HCT116 (cell line): ENCODE measurements at regions of chr17 and their contacts with region 1.

Region 1: GRCh38 chr17:74089869-74090464 is 113.5 kb upstream of the RPL38 start:
- DNase-seq: peak; percentile 66
- ATAC-seq: peak; percentile 88
- H3K4me3 ChIP-seq: no peak overlapping the region
- H3K27ac ChIP-seq: no peak overlapping the region
- H3K4me1 ChIP-seq: no peaks in the 10 kb centered on the region
- H3K27me3 ChIP-seq: peaks cover 23% of the 10 kb centered on the region
- CTCF ChIP-seq: peak; percentile 66 to 99 (median 93); a peak in 5 of 6 replicates
- POLR2A ChIP-seq: no peak
- RAD21 ChIP-seq: peak; percentile 70

Region 2: GRCh38 chr17:73719588-73720071 is 370.3 kb before region 1 on chr17:
- CTCF ChIA-PET with region 1: no interaction called
- POLR2A ChIA-PET with region 1: no interaction called
- RAD21 ChIA-PET with region 1: no interaction called
- intact Hi-C with region 1: no loop called
- DNase-seq: no peak
- ATAC-seq: no peak
- H3K4me3 ChIP-seq: no peak overlapping the region
- H3K27ac ChIP-seq: no peak overlapping the region
- H3K4me1 ChIP-seq: no peaks in the 10 kb centered on the region
- H3K27me3 ChIP-seq: peaks cover 57% of the 10 kb centered on the region
- CTCF ChIP-seq: no peak
- POLR2A ChIP-seq: no peak
- RAD21 ChIP-seq: no peak

Region 3: GRCh38 chr17:74037320-74037719 is 52.6 kb before region 1 on chr17:
- CTCF ChIA-PET with region 1: no interaction called
- POLR2A ChIA-PET with region 1: no interaction called
- RAD21 ChIA-PET with region 1: no interaction called
- intact Hi-C with region 1: no loop called
- DNase-seq: no peak
- ATAC-seq: peak; percentile 39; the same call in 1 of the 2 replicates
- H3K4me3 ChIP-seq: no peak overlapping the region
- H3K27ac ChIP-seq: no peak overlapping the region
- H3K4me1 ChIP-seq: peaks cover under 1 to 3% of the 10 kb centered on the region in 2 experiments
- H3K27me3 ChIP-seq: peaks cover 28% of the 10 kb centered on the region; the same call in 1 of the 2 replicates
- CTCF ChIP-seq: no peak
- POLR2A ChIP-seq: no peak
- RAD21 ChIP-seq: no peak

Region 4: DNA sequence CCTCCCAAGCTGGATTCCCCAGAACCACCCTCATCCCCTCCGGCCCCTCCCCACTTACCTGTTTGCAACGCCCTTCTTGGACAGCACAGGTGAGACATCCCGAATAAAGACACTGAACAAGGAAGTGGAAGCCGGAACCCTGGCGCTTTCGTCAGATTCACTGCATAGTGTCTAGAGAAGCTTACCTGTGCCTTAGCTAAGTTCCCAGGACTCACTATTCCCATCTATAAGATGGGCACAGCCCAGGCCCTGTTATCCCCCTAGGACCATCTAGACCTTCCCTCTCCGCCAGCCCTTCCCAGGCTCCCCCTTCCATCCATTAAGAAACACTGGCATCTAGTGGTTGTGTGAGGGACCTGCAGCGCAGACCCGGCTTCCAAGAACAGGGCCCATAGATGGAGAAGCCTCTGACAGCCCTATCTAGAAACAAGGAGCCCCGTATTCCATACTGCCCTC is 86.6 kb after region 1 on chr17:
- CTCF ChIA-PET with region 1: interaction called, 5 read pairs
- POLR2A ChIA-PET with region 1: no interaction called
- RAD21 ChIA-PET with region 1: interaction called in 1 of 2 experiments, 7 read pairs
- intact Hi-C with region 1: loop called (anchors 1 kb)
- DNase-seq: peak; percentile 56
- ATAC-seq: peak; percentile 97
- H3K4me3 ChIP-seq: no peak overlapping the region
- H3K27ac ChIP-seq: no peak overlapping the region
- H3K4me1 ChIP-seq: no peaks in the 10 kb centered on the region
- H3K27me3 ChIP-seq: peaks cover 38% of the 10 kb centered on the region; the same call in 1 of the 2 replicates
- CTCF ChIP-seq: peak; percentile 89 to 99 (median 97)
- POLR2A ChIP-seq: no peak
- RAD21 ChIP-seq: peak; percentile 98

Region 5: DNA sequence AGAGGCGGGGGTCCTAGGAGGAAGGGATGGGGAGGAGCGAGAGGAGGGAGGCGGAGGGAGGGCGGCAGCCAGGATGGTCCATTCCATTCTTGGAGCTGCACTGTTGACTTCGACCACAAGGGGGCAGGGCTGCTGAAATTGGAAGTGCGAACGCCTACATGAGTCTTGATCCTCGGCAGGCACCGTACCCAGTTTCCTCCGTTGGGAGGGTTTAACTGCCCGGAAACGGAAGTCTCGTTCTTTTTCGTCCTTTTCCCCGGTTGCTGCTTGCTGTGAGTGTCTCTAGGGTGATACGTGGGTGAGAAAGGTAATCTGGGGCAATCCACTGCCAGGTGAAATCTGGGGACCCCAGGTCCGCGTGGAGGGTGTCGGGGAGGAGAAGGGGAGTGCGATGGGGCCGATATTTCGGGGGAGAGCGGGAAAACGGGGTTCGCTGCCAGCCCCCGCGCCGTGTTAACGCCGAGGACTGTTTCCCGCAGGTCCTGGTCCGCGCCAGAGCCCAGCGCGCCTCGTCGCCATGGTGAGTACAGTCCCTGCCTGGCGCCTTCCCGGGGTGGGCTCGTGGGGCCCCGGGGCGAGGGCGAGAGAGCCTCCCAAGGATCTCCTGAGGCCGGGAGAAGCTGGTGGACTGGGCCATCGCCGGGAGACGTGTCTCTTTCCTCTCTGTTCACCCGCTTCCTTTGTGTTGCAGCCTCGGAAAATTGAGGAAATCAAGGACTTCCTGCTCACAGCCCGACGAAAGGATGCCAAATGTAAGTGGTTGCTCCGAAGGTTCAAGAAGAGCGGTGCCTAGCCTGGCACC is 113.7 kb after region 1 on chr17 and contains the start of gene RPL38:
- CTCF ChIA-PET with region 1: interaction called, 21 read pairs
- POLR2A ChIA-PET with region 1: interaction called, 3 read pairs
- RAD21 ChIA-PET with region 1: interaction called, 3 to 6 read pairs
- intact Hi-C with region 1: loop called (anchors 5 kb)
- DNase-seq: peak; percentile 99
- ATAC-seq: peak; percentile 74
- H3K4me3 ChIP-seq: peak within 1 kb of the TSS; percentile 98 to 99
- H3K27ac ChIP-seq: peak within 1 kb of the TSS; percentile 65
- H3K4me1 ChIP-seq: peaks cover 11 to 48% of the 10 kb centered on the region in 2 experiments
- H3K27me3 ChIP-seq: no peaks in the 10 kb centered on the region
- CTCF ChIP-seq: peak; percentile 83 to 98 (median 98)
- POLR2A ChIP-seq: peak; percentile 98
- RAD21 ChIP-seq: no peak
- total RNA-seq, gene RPL38: 1,628 TPM

Region 6: GRCh38 chr17:74217037-74217730 is 127.2 kb after region 1 on chr17:
- CTCF ChIA-PET with region 1: no interaction called
- POLR2A ChIA-PET with region 1: no interaction called
- RAD21 ChIA-PET with region 1: no interaction called
- intact Hi-C with region 1: no loop called
- DNase-seq: no peak
- ATAC-seq: no peak
- H3K4me3 ChIP-seq: no peak overlapping the region
- H3K27ac ChIP-seq: no peak overlapping the region
- H3K4me1 ChIP-seq: peaks cover 13 to 28% of the 10 kb centered on the region in 2 experiments
- H3K27me3 ChIP-seq: no peaks in the 10 kb centered on the region
- CTCF ChIP-seq: no peak
- POLR2A ChIP-seq: no peak
- RAD21 ChIP-seq: no peak